Activated T-helper 2 cell treated with anti-CD3 and anti-CD28 coated beads, Interferon-gamma antibody, Interleukin-2, Interleukin-4, amounts not matched to agents 10 μg/mL and 5 μg/mL and 100 μg/mL, durations not matched to agents 14 hours and 24 hours and 36 hours (primary cell): ENCODE measurements at regions of chr1 and their contacts with region 1.

Region 1: GRCh38 chr1:159009704-159010361 is at the start of gene IFI16:
- DNase-seq: peak; percentile 70
- H3K4me3 Mint-ChIP-seq: peak within 1 kb of the TSS; percentile 96
- H3K27ac Mint-ChIP-seq: peak within 1 kb of the TSS; percentile 99
- H3K4me1 Mint-ChIP-seq: peaks cover 57% of the 10 kb centered on the region
- H3K27me3 Mint-ChIP-seq: no peaks in the 10 kb centered on the region
- total RNA-seq, gene IFI16: 108 and 113 TPM in 2 replicates

Region 2: DNA sequence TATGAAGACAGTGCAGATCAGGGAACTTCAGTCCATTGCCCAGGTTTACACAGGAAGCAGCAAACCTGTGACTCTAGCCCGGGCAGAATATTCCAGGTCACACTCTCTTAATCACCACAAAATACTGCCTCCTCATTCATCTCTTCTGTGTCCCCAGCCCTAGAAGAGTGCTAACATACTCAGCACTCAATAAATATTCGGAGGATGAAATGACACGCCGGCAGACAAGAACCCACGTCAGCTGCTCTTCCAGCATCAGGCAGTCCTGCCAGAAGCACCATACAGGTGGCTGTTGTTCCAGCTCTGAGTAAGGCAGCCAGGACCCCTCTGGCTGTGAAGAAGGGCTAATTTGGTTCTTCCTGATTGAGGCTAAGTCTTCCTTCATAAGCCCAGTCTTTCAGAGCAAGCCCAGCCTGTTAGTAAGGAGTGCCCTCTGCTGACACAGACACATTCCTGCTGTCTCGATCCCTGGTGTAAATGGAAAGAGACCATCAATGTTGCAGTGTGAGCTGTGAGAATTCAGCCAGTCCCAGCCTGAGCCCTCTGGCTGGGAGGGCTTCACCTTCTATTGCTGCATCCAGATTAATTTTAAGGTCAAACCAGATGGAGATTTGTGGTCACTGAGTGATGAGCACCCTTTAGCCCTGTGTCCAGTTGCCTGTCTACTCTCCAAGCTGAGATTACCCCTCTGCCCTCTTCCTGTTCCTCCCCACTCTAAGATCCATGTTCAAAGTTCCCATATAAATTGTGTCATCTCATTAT is 1061.3 kb before region 1 on chr1:
- intact Hi-C with region 1: no loop called
- DNase-seq: no peak
- H3K4me3 Mint-ChIP-seq: no peak overlapping the region
- H3K27ac Mint-ChIP-seq: no peak overlapping the region
- H3K4me1 Mint-ChIP-seq: no peaks in the 10 kb centered on the region
- H3K27me3 Mint-ChIP-seq: peaks cover 11% of the 10 kb centered on the region

Region 3: DNA sequence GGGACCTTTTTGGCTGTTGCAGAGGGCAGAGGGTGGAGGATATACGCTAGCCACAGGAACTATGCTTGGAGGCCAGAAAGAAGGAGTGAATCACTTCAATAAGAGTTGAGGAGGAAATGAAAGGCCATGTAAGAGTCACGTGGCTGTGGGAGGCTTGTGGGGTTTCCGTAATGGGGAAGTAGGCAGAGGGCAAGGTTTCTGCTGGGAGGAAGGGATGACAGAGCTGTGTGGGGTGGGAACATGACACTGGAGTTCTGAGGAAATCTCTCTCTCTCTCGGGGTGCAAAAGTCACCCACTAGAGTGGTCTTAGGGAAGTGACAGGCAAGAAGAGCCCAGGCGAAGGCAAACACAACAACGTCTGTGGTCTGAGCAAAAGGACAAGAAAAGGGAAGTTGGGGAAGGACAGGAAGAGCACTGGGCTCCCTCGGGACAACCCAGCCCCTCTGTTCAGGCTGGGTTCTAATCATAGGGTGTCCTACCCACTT is 724.0 kb before region 1 on chr1:
- intact Hi-C with region 1: loop called (anchors 2 kb)
- DNase-seq: no peak
- H3K4me3 Mint-ChIP-seq: no peak overlapping the region
- H3K27ac Mint-ChIP-seq: peak overlapping the region; percentile 69
- H3K4me1 Mint-ChIP-seq: peaks cover 26% of the 10 kb centered on the region
- H3K27me3 Mint-ChIP-seq: peaks cover 3% of the 10 kb centered on the region

Region 4: DNA sequence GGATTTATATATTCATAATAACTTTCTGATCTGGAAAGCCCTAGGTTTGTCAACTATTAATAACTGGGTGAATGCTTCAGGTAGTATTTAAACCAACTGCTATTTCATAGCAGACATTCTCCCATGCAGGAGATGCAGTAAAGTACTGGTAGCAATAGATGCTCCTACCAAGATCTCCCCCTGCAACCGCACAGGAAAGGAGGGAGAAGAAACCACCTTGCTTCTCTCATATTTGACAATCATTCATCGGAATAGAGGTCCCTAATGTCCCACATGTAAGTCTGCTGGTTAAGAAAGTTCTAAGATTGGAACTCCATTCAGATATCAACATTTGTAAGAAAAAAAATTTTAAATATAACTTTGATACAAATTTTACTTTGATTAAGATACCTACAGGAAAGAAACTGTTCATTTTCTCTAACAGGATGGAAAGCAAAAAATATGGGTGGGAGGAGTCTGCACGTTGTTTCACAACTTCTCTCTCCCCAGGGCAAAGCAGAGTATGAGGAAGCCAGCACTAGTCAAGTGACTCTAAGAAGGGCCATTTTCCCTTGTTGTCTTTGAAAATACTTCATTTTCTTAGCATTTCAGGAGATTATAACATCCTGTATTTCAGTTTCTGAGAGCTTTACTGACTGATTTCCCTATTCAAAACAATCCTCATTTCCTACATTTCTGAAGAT is 78.6 kb before region 1 on chr1 and contains the start of gene PYHIN1:
- intact Hi-C with region 1: loop called (anchors 2 kb)
- DNase-seq: peak; percentile 20
- H3K4me3 Mint-ChIP-seq: peak within 1 kb of the TSS; percentile 91
- H3K27ac Mint-ChIP-seq: peak within 1 kb of the TSS; percentile 91
- H3K4me1 Mint-ChIP-seq: peaks cover 35% of the 10 kb centered on the region
- H3K27me3 Mint-ChIP-seq: no peaks in the 10 kb centered on the region
- total RNA-seq, gene PYHIN1: 7.4 and 10.0 TPM in 2 replicates

Region 5: GRCh38 chr1:158998781-158999161 is 11.1 kb before region 1 on chr1:
- intact Hi-C with region 1: loop called (anchors 1 kb)
- DNase-seq: peak; percentile 33
- H3K4me3 Mint-ChIP-seq: peak overlapping the region; percentile 43
- H3K27ac Mint-ChIP-seq: no peak overlapping the region
- H3K4me1 Mint-ChIP-seq: peaks cover 31% of the 10 kb centered on the region
- H3K27me3 Mint-ChIP-seq: no peaks in the 10 kb centered on the region

Region 6: GRCh38 chr1:159040206-159040605 is 30.4 kb after region 1 on chr1:
- intact Hi-C with region 1: no loop called
- DNase-seq: no peak
- H3K4me3 Mint-ChIP-seq: no peak overlapping the region
- H3K27ac Mint-ChIP-seq: no peak overlapping the region
- H3K4me1 Mint-ChIP-seq: peaks cover 27% of the 10 kb centered on the region
- H3K27me3 Mint-ChIP-seq: no peaks in the 10 kb centered on the region

Region 7: GRCh38 chr1:159089184-159089791 is 79.5 kb after region 1 on chr1:
- intact Hi-C with region 1: loop called (anchors 1 kb)
- DNase-seq: no peak
- H3K4me3 Mint-ChIP-seq: no peak overlapping the region
- H3K27ac Mint-ChIP-seq: peak overlapping the region; percentile 85
- H3K4me1 Mint-ChIP-seq: peaks cover 50% of the 10 kb centered on the region
- H3K27me3 Mint-ChIP-seq: no peaks in the 10 kb centered on the region

Region 8: GRCh38 chr1:159218649-159219636 is 209.1 kb after region 1 on chr1:
- intact Hi-C with region 1: no loop called
- DNase-seq: no peak
- H3K4me3 Mint-ChIP-seq: no peak overlapping the region
- H3K27ac Mint-ChIP-seq: no peak overlapping the region
- H3K4me1 Mint-ChIP-seq: peaks cover 1% of the 10 kb centered on the region
- H3K27me3 Mint-ChIP-seq: peaks cover 3% of the 10 kb centered on the region